GM10248 (cell line): ENCODE measurements at regions of chr16 and their contacts with region 1.

Region 1: DNA sequence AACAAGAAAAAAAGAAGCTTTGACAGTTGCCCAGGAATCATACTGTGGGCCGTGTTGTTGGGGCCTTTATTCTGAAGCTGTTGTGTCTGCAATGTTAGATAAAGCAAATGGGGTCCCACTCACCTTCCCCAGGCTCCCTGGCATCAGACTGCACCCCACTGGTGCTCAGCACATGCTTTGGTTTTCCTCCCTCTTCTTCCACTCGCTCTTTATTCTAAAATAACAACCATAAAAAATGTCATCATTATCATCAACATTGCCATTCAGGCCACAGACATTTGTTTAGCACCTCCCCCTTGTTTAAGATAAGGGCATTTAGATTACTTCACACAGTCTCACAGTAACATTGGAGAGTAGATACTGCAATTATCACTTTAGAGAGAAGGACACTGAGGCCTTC is 8.2 kb downstream of the MYLK3 start:
- DNase-seq: no peak
- CTCF ChIP-seq: no peak

Region 2: DNA sequence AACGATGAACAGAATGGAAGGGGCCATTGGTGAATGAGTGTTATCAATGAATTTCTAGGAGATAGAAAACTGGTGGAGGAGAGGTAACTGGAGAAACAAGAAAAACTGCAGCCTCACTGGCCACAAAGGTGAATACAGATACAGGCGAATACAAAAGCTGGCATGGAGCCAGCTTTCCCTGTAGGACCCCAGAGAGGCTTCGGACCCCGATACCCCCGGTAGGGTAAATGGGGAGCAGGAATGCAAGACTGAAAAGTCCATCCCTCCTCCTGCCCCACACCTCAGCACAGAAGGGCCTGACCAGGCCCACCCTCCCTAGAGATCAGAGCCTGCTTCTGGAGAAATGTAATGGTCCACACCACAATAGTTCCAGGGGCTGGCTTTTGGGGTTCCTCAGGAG is 13.1 kb after region 1 on chr16:
- CTCF ChIA-PET with region 1: interaction called, 12 read pairs
- POLR2A ChIA-PET with region 1: no interaction called
- DNase-seq: no peak
- CTCF ChIP-seq: no peak